Motor neuron (in vitro differentiated cells): ENCODE measurements at regions of chr20 and their contacts with region 1.

Region 1: GRCh38 chr20:35994994-35995453 is 26.6 kb downstream of the CNBD2 start:
- ATAC-seq: peak; percentile 82 to 99 (median 96)
- H3K4me3 ChIP-seq: no peak overlapping the region
- H3K27ac ChIP-seq: no peak overlapping the region
- H3K4me1 ChIP-seq: peaks cover 0 to 5% of the 10 kb centered on the region in 2 donors

Region 2: GRCh38 chr20:36128463-36129159 is 133.6 kb after region 1 on chr20:
- in situ Hi-C with region 1: loop called in 6 of 9 experiments (anchors 10 to 25 kb)
- ATAC-seq: peak; percentile 23 to 73 (median 62)
- H3K4me3 ChIP-seq: no peak overlapping the region
- H3K27ac ChIP-seq: no peak overlapping the region
- H3K4me1 ChIP-seq: peaks cover 11 to 20% of the 10 kb centered on the region in 2 donors

Region 3: GRCh38 chr20:36145877-36146707 is 151.1 kb after region 1 on chr20:
- in situ Hi-C with region 1: loop called in 5 of 9 experiments (anchors 10 to 25 kb)
- ATAC-seq: peak in 1 of 8 experiments; percentile 13
- H3K4me3 ChIP-seq: no peak overlapping the region
- H3K27ac ChIP-seq: no peak overlapping the region
- H3K4me1 ChIP-seq: peaks cover 0 to 2% of the 10 kb centered on the region in 2 donors

Region 4: DNA sequence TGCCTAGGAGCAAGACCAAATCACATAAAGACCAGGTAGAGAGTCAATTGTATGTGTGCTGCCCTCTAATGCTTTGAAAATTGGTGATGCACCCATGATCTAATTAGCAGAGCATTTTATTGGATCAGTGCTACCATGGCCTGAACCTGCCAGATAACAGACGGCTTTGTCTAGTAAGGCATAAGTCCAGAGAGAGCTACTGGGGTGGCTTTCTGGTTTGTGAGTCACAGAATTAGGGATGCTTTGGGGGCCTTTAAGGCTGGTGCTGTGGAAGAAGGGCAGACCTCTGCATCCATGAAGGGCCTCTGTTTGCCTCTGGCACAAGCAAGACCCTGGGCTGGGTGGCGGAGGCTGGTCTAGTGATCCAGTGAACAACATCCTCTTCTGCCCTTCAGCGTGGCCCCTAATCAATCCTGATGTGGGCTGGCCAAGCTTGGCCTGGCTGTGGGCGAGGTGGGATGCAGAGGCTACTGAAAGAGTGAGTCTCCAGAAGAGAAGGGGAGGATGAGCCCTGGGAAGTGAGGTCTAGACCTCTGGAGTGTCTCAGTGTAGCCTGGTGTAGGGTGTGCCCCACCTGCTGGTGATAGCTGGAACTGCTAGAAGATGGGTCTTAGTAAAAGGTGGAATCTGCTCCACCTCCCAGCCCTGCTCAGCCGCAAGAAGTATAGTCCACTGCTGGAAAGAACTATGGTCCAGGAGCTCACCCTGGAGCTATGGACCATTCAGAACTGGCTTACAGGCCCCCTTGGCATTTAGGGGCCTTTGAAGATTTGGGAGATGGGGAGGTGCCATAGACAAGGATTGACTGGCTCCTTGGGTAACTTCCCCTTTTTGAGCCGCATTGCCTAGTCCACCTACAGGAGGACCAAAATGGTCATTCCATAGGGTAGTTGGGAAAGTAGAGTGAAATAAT is 204.6 kb after region 1 on chr20:
- in situ Hi-C with region 1: loop called in 1 of 9 experiments (anchors 25 kb)
- ATAC-seq: peak; percentile 83 to 96 (median 90)
- H3K4me3 ChIP-seq: no peak overlapping the region
- H3K27ac ChIP-seq: no peak overlapping the region
- H3K4me1 ChIP-seq: peaks cover 0 to 3% of the 10 kb centered on the region in 2 donors

Region 5: GRCh38 chr20:36439040-36439730 is 444.2 kb after region 1 on chr20:
- in situ Hi-C with region 1: loop called in 4 of 9 experiments (anchors 25 kb)
- ATAC-seq: peak; percentile 23 to 90 (median 76)
- H3K4me3 ChIP-seq: no peak overlapping the region
- H3K27ac ChIP-seq: no peak overlapping the region
- H3K4me1 ChIP-seq: peaks cover 6 to 13% of the 10 kb centered on the region in 2 donors